PC-9 (cell line): ENCODE measurements at regions of chr6 and their contacts with region 1.

Region 1: GRCh38 chr6:28981833-28982475 is 23.2 kb downstream of the ZNF311 start:
- DNase-seq: peak; percentile 82 to 86
- H3K4me3 ChIP-seq: peak overlapping the region; percentile 76
- H3K27ac ChIP-seq: peak overlapping the region; percentile 81
- H3K4me1 ChIP-seq: peaks cover 55% of the 10 kb centered on the region
- H3K27me3 ChIP-seq: no peaks in the 10 kb centered on the region
- CTCF ChIP-seq: peak; percentile 2; the same call in 1 of the 2 replicates

Region 2: GRCh38 chr6:28838634-28839442 is 143.1 kb before region 1 on chr6:
- CTCF ChIA-PET with region 1: no interaction called
- POLR2A ChIA-PET with region 1: interaction called, 9 read pairs
- intact Hi-C with region 1: loop called (anchors 1 kb)
- DNase-seq: peak; percentile 71 to 83
- H3K4me3 ChIP-seq: peak overlapping the region; percentile 95
- H3K27ac ChIP-seq: peak overlapping the region; percentile 44
- H3K4me1 ChIP-seq: peaks cover 13% of the 10 kb centered on the region
- H3K27me3 ChIP-seq: no peaks in the 10 kb centered on the region
- CTCF ChIP-seq: peak; percentile 74

Region 3: DNA sequence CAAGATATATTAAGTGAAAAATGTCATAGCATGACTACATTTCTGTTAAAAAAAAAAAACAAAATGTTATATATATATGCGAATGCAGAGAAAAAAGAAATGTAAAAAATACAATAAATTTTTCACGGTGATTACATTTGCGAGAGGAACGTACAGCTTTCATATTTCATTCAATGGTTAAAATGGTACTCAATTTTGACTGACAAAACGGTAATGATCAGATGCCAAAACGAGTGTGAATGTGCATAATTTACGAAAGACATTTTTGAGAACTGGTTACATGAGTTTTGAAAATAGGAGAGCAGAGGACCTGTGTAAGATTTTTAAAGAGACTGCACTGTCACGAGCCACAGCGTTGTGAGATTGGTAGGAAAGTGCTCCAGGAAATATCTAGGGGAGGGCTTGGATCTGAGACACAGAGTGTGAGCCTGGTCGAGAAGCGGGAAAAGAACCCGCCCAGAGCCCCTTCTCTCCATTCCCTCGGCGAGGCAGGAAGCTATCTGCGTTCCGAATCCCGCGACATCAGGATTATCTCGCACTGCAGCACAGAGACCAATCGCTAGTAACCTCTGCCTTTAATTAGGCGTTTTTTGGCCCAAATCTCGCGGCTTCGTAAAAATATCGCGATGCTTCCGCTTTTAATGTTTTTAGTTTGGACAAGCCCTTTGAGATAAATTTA is 86.7 kb before region 1 on chr6:
- CTCF ChIA-PET with region 1: no interaction called
- POLR2A ChIA-PET with region 1: no interaction called
- intact Hi-C with region 1: loop called (anchors 1 kb)
- DNase-seq: peak; percentile 92
- H3K4me3 ChIP-seq: peak overlapping the region; percentile 92
- H3K27ac ChIP-seq: peak overlapping the region; percentile 89
- H3K4me1 ChIP-seq: peaks cover 7% of the 10 kb centered on the region
- H3K27me3 ChIP-seq: no peaks in the 10 kb centered on the region
- CTCF ChIP-seq: no peak

Region 4: GRCh38 chr6:28947831-28948270 is 34.1 kb before region 1 on chr6:
- CTCF ChIA-PET with region 1: interaction called, 10 read pairs
- POLR2A ChIA-PET with region 1: interaction called, 24 read pairs
- intact Hi-C with region 1: loop called (anchors 1 kb)
- DNase-seq: peak; percentile 72 to 97
- H3K4me3 ChIP-seq: peak overlapping the region; percentile 3; the same call in 1 of the 2 replicates
- H3K27ac ChIP-seq: peak overlapping the region; percentile 78
- H3K4me1 ChIP-seq: peaks cover 40% of the 10 kb centered on the region
- H3K27me3 ChIP-seq: no peaks in the 10 kb centered on the region
- CTCF ChIP-seq: no peak

Region 5: DNA sequence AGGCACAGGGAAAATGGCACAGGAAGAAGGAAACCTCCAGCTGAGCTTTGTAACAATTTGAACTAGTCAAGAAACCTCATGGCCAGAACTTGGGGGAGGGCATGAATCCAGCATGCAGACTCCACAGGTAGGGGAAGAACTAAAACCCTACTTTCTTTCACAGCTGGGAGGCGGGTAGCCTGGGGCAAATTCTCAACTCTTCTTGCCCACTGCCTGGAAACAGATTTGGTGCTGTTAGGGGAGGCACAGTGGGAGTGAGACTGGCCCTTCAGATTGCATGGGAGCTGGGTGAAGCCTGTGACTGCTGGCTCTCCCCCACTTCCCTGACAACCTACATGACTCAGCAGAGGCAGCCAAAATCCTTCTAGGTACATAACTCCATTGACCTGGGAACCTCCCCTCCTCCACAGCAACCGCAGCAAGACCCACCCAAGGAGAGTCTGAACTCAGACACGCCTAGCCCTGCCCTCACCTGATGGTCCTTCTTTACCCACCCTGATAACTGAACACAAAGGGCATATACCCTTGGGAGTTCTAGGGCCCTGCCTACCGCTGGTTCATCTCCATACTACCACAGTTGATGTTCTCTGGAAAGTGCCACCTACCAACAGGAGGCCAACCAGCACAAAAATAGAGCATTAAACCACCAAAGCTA is 21.0 kb before region 1 on chr6:
- CTCF ChIA-PET with region 1: no interaction called
- POLR2A ChIA-PET with region 1: no interaction called
- intact Hi-C with region 1: loop called (anchors 2 kb)
- DNase-seq: peak in 1 of 2 experiments; percentile 43
- H3K4me3 ChIP-seq: no peak overlapping the region
- H3K27ac ChIP-seq: peak overlapping the region; percentile 71
- H3K4me1 ChIP-seq: peaks cover 16% of the 10 kb centered on the region
- H3K27me3 ChIP-seq: no peaks in the 10 kb centered on the region
- CTCF ChIP-seq: no peak

Region 6: GRCh38 chr6:29016559-29017427 is 34.8 kb after region 1 on chr6:
- CTCF ChIA-PET with region 1: no interaction called
- POLR2A ChIA-PET with region 1: no interaction called
- intact Hi-C with region 1: loop called (anchors 2 kb)
- DNase-seq: peak; percentile 62 to 77
- H3K4me3 ChIP-seq: peak overlapping the region; percentile 73
- H3K27ac ChIP-seq: no peak overlapping the region
- H3K4me1 ChIP-seq: no peaks in the 10 kb centered on the region
- H3K27me3 ChIP-seq: no peaks in the 10 kb centered on the region
- CTCF ChIP-seq: peak; percentile 94